CD4-positive, alpha-beta T cell (primary cell): ENCODE measurements at regions of chr3 and their contacts with region 1.

Region 1: DNA sequence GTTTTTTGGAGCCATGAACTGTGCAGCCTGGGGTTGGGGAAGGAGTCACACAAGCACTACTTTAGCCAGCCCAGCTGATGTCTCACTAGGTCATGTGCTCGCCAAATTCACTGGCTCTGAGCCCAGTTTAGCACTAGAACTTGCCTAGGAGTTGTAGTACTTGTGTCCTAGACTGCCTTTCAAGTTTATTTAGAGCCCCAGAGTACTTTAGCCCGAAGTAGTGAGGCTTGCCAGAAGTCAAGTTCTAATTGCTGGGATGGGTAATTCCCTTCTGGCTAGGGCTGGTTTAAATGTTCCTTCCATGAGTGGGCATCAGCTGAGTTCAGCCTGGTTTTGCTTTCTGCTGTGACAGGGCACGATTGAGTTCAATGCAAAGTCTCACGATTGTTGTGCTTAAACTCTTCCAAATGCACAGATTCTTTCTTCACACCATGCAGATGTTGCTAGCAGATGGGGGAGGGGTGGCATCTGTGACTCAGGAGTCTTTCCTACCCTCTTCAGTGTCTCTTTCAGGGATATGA is 228.2 kb upstream of the ZPLD1 start:
- DNase-seq: no peak
- ATAC-seq: no peak
- H3K4me3 ChIP-seq: no peak overlapping the region
- H3K4me3 Mint-ChIP-seq: no peak overlapping the region
- H3K27ac ChIP-seq: no peak overlapping the region
- H3K27ac Mint-ChIP-seq: no peak overlapping the region
- H3K4me1 ChIP-seq: no peaks in the 10 kb centered on the region
- H3K4me1 Mint-ChIP-seq: no peaks in the 10 kb centered on the region
- H3K27me3 ChIP-seq: no peaks in the 10 kb centered on the region
- H3K27me3 Mint-ChIP-seq: no peaks in the 10 kb centered on the region
- CTCF ChIP-seq: no peak

Region 2: GRCh38 chr3:101988591-101988990 is 218.0 kb before region 1 on chr3:
- CTCF ChIA-PET with region 1: no interaction called
- POLR2A ChIA-PET with region 1: no interaction called
- intact Hi-C with region 1: loop called in 1 of 2 experiments (anchors 5 kb)
- DNase-seq: peak in 1 of 14 experiments; percentile 25
- ATAC-seq: no peak
- H3K4me3 ChIP-seq: no peak overlapping the region
- H3K4me3 Mint-ChIP-seq: no peak overlapping the region
- H3K27ac ChIP-seq: no peak overlapping the region
- H3K27ac Mint-ChIP-seq: no peak overlapping the region
- H3K4me1 ChIP-seq: peaks cover 6% of the 10 kb centered on the region
- H3K4me1 Mint-ChIP-seq: peaks cover 6% of the 10 kb centered on the region
- H3K27me3 ChIP-seq: no peaks in the 10 kb centered on the region
- H3K27me3 Mint-ChIP-seq: no peaks in the 10 kb centered on the region
- CTCF ChIP-seq: no peak

Region 3: GRCh38 chr3:102248981-102249705 is 42.6 kb after region 1 on chr3:
- CTCF ChIA-PET with region 1: no interaction called
- POLR2A ChIA-PET with region 1: no interaction called
- intact Hi-C with region 1: no loop called
- DNase-seq: no peak
- ATAC-seq: no peak
- H3K4me3 ChIP-seq: no peak overlapping the region
- H3K4me3 Mint-ChIP-seq: no peak overlapping the region
- H3K27ac ChIP-seq: no peak overlapping the region
- H3K27ac Mint-ChIP-seq: no peak overlapping the region
- H3K4me1 ChIP-seq: no peaks in the 10 kb centered on the region
- H3K4me1 Mint-ChIP-seq: no peaks in the 10 kb centered on the region
- H3K27me3 ChIP-seq: no peaks in the 10 kb centered on the region
- H3K27me3 Mint-ChIP-seq: peaks cover 20% of the 10 kb centered on the region
- CTCF ChIP-seq: no peak

Region 4: GRCh38 chr3:102332205-102332604 is 125.6 kb after region 1 on chr3:
- CTCF ChIA-PET with region 1: no interaction called
- POLR2A ChIA-PET with region 1: no interaction called
- intact Hi-C with region 1: no loop called
- DNase-seq: no peak
- ATAC-seq: no peak
- H3K4me3 ChIP-seq: no peak overlapping the region
- H3K4me3 Mint-ChIP-seq: no peak overlapping the region
- H3K27ac ChIP-seq: no peak overlapping the region
- H3K27ac Mint-ChIP-seq: no peak overlapping the region
- H3K4me1 ChIP-seq: no peaks in the 10 kb centered on the region
- H3K4me1 Mint-ChIP-seq: no peaks in the 10 kb centered on the region
- H3K27me3 ChIP-seq: no peaks in the 10 kb centered on the region
- H3K27me3 Mint-ChIP-seq: peaks cover 4% of the 10 kb centered on the region
- CTCF ChIP-seq: no peak